Activated CD4-positive, alpha-beta T cell treated with anti-CD3 and anti-CD28 coated beads, Interleukin-2, amount 10 ng/mL, durations not matched to agents 24 days and 14 days (primary cell): ENCODE measurements at regions of chr11 and their contacts with region 1.

Region 1: GRCh38 chr11:48109046-48109666 is 107.5 kb upstream of the OR4B1 start:
- DNase-seq: no peak
- H3K4me3 Mint-ChIP-seq: peak overlapping the region; percentile 66
- H3K27ac Mint-ChIP-seq: peak overlapping the region; percentile 83
- H3K4me1 Mint-ChIP-seq: peaks cover 53% of the 10 kb centered on the region
- H3K27me3 Mint-ChIP-seq: no peaks in the 10 kb centered on the region

Region 2: DNA sequence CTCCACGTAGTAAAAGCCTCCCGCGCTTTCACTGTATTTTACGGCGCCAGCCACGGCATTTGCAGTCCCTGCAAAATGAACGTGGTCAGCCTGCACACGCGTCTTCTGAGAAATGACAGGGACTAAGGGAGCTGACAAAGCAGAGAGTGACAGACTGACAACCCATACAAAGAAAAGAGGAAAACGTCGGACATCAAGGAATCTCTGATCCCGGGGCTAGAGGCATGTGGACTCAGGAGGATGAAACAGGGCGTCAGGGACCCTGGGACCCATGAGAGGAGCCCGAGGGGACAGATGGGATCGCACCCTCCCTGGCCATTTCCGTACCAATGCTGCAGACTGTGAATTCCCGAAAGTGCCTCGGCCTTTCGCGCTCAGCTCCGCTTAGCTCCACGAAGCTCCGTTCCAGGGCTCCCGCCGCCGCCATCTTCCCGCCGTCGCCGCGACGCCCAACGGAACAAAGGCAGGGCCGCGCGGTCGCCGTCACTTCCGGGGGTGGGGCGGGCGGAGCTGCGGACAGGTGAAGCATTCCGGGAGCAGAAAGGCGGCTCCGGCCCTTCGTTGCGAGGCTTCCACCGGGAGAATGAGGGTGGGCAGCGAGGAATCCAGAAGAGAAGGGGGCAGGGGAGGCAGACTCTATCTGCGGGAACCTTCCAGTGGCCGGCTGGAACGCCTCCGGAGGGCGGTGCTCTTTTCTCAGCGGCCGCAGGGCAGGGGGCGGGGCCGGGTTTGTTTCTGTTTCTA is 261.1 kb before region 1 on chr11 and contains the start of gene NUP160:
- intact Hi-C with region 1: loop called (anchors 2 kb)
- DNase-seq: peak; percentile 98
- H3K4me3 Mint-ChIP-seq: peak within 1 kb of the TSS; percentile 99
- H3K27ac Mint-ChIP-seq: peak within 1 kb of the TSS; percentile 99
- H3K4me1 Mint-ChIP-seq: peaks cover 38% of the 10 kb centered on the region
- H3K27me3 Mint-ChIP-seq: no peaks in the 10 kb centered on the region
- total RNA-seq, gene NUP160: 102 and 104 TPM in 2 replicates

Region 3: DNA sequence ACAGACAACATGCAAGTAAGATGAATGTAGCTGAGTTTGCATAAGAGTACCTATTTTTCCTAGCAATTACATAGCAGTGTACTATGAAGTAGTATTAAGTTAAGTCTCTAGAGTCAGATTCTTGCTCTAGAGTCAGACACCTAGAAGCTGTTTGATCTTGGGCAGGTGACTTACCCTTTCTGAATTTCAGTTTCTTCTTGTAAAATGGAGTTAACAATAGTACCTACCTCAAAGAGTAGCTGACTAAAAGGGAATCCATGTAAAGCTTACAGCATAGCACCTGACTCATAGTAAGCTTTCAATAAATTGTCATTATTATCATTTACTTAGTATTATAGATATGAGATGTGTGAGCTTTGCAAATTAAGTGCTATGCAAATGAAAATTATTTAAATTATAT is 176.6 kb before region 1 on chr11:
- intact Hi-C with region 1: loop called (anchors 1 kb)
- DNase-seq: no peak
- H3K4me3 Mint-ChIP-seq: no peak overlapping the region
- H3K27ac Mint-ChIP-seq: no peak overlapping the region
- H3K4me1 Mint-ChIP-seq: peaks cover 22% of the 10 kb centered on the region
- H3K27me3 Mint-ChIP-seq: no peaks in the 10 kb centered on the region

Region 4: DNA sequence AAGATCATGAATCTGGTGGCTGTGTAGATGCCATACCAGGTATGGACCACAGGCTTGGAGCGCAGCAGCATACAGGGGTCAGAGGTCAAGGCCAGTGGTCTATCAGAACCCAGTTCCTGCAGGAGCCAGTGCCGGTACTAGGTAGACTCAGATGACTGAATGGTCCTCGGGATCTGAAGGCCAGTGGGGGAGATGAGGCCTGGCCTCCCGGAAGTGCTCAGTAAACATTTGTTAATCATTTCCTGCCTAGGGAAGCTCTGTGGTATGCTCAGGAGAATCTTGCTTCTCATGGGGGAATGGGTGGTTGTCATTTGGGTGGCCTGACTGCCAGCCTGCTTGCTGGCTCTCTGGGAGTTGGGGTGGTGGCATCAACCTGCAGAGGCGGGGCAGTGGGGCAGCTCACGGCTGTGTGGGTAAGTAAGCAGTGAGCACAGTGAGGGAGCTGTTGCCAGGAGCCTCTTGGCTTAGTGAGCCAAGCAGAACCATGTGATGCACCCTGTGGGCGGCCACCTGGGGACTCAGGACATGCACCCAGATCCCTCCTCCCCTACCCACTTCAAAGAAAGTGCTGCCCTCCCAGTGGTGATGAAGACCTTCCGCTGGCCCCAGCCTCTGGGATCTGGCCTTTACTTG is 95.8 kb before region 1 on chr11:
- intact Hi-C with region 1: loop called (anchors 1 kb)
- DNase-seq: peak; percentile 82
- H3K4me3 Mint-ChIP-seq: peak overlapping the region; percentile 56
- H3K27ac Mint-ChIP-seq: peak overlapping the region; percentile 98
- H3K4me1 Mint-ChIP-seq: peaks cover 83% of the 10 kb centered on the region
- H3K27me3 Mint-ChIP-seq: no peaks in the 10 kb centered on the region

Region 5: DNA sequence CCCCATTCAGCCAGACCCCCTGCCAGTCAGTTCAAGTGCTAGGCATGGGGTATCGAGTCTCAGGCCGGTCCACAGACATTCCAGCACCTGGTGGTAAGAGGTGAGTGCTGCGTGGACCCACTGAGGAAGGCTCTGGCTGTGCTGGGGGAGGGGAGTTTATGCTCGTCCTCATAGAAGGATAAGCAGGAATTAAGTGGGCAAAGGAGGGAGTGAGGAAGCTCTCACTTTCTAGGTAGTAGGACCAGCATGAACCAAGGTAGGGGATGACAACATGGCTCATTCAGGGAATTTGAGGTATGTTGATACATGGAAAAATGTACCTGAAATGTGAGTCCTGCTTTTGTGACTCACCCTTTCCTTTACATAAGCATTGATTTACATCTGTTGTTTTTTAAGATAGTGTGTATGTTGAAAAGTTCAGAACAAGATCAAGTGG is 12.1 kb before region 1 on chr11:
- intact Hi-C with region 1: loop called (anchors 1 kb)
- DNase-seq: no peak
- H3K4me3 Mint-ChIP-seq: peak overlapping the region; percentile 62
- H3K27ac Mint-ChIP-seq: peak overlapping the region; percentile 93
- H3K4me1 Mint-ChIP-seq: peaks cover 59% of the 10 kb centered on the region
- H3K27me3 Mint-ChIP-seq: no peaks in the 10 kb centered on the region